Activated CD4-positive, alpha-beta T cell treated with anti-CD3 and anti-CD28 coated beads for 36 hours (primary cell): ENCODE measurements at regions of chr6 and their contacts with region 1.

Region 1: DNA sequence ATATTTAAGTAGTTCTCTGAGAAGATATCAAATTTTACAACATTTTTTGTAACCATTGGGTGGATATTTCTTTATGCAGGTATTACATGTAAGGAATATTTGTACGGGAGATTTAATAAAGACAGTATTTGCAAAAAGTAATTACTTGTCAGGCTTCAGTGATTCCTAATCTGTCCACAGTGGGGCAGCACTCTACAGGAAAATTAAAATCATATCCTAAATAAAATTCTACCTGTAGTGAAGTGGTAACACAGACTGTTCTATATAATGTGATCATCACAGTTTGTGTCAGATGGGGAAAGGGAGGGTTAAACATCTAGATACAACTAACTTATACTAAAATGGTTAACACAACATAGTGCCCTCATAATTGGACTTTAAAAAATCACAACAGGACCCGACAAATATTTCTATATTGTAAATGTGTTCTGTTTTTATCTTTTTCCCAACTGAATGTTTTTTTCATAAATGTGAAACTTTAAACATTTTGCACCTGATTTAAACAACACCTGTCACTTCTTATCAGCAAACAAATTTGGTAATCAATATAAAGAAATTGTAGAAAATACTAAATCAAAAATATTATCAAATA is 145.6 kb upstream of the MANEA start:
- DNase-seq: peak; percentile 59
- ATAC-seq: no peak
- H3K4me3 Mint-ChIP-seq: no peak overlapping the region
- H3K27ac Mint-ChIP-seq: no peak overlapping the region
- H3K4me1 Mint-ChIP-seq: no peaks in the 10 kb centered on the region
- H3K27me3 Mint-ChIP-seq: no peaks in the 10 kb centered on the region

Region 2: DNA sequence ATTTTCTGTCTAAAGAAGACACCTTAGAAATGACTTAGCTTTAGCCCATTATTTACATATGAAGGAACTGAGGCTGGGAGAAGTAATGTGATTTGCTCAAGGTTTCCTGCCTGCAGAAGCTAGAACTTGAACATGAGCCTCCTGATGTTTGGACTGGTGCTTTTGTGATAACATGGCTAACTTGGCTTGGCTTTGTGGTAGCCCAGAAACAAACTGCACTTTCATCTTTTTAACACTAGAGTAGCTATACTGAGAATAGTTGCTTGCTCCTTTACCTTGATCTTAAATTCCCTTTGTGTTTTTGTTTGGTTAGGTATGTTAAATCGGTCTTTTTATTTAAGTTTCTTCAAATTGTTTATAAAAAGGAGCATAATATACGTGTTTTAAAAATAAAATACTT is 17.9 kb before region 1 on chr6:
- CTCF ChIA-PET with region 1: no interaction called
- POLR2A ChIA-PET with region 1: no interaction called
- intact Hi-C with region 1: no loop called
- DNase-seq: no peak
- ATAC-seq: no peak
- H3K4me3 Mint-ChIP-seq: no peak overlapping the region
- H3K27ac Mint-ChIP-seq: no peak overlapping the region
- H3K4me1 Mint-ChIP-seq: no peaks in the 10 kb centered on the region
- H3K27me3 Mint-ChIP-seq: peaks cover 1% of the 10 kb centered on the region

Region 3: DNA sequence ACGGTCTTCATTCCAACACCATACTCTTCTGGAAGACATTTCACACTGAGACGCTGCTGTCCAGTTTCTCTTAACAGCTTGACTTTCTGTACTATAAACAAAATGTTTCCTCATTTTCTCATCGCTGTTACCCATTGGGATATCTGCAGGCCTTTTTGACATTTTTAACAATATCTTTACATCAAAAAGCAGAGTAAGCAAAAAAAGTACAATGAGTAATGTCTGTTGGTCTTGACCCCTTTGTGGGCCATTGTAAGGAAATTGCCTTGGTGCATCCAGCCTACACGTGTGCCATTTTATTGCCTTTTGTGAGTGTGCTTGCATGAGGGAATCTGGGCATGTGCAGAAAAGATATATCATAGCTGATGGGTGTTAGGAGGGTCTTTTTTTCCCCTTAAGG is 16.5 kb after region 1 on chr6:
- CTCF ChIA-PET with region 1: no interaction called
- POLR2A ChIA-PET with region 1: no interaction called
- intact Hi-C with region 1: no loop called
- DNase-seq: no peak
- ATAC-seq: no peak
- H3K4me3 Mint-ChIP-seq: no peak overlapping the region
- H3K27ac Mint-ChIP-seq: no peak overlapping the region
- H3K4me1 Mint-ChIP-seq: no peaks in the 10 kb centered on the region
- H3K27me3 Mint-ChIP-seq: peaks cover 3% of the 10 kb centered on the region

Region 4: DNA sequence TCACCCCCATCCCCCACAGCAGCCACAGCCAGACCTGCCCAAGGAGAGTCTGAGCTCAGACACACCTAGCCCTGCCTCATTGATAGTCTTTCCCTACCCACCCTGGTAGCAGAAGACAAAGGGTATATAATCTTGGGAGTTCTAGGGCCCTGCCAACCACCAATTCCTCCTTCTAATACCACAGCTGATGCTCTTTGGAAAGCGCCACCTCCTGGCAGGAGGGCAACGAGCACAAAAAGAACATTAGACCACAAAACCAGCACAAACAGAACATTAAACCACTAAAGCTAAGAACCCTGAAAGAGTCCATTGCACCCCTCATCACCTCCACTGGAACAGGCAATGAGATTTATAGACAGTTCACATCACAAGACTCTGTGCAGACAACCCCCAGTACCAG is 388.2 kb after region 1 on chr6:
- CTCF ChIA-PET with region 1: no interaction called
- POLR2A ChIA-PET with region 1: no interaction called
- intact Hi-C with region 1: loop called in 1 of 2 experiments (anchors 2 kb)
- DNase-seq: peak; percentile 12
- ATAC-seq: no peak
- H3K4me3 Mint-ChIP-seq: no peak overlapping the region
- H3K27ac Mint-ChIP-seq: no peak overlapping the region
- H3K4me1 Mint-ChIP-seq: no peaks in the 10 kb centered on the region
- H3K27me3 Mint-ChIP-seq: no peaks in the 10 kb centered on the region

Region 5: GRCh38 chr6:95866732-95867131 is 435.0 kb after region 1 on chr6:
- CTCF ChIA-PET with region 1: no interaction called
- POLR2A ChIA-PET with region 1: no interaction called
- intact Hi-C with region 1: loop called in 1 of 2 experiments (anchors 2 kb)
- DNase-seq: peak; percentile 18
- ATAC-seq: no peak
- H3K4me3 Mint-ChIP-seq: no peak overlapping the region
- H3K27ac Mint-ChIP-seq: no peak overlapping the region
- H3K4me1 Mint-ChIP-seq: no peaks in the 10 kb centered on the region
- H3K27me3 Mint-ChIP-seq: peaks cover 4% of the 10 kb centered on the region

Region 6: DNA sequence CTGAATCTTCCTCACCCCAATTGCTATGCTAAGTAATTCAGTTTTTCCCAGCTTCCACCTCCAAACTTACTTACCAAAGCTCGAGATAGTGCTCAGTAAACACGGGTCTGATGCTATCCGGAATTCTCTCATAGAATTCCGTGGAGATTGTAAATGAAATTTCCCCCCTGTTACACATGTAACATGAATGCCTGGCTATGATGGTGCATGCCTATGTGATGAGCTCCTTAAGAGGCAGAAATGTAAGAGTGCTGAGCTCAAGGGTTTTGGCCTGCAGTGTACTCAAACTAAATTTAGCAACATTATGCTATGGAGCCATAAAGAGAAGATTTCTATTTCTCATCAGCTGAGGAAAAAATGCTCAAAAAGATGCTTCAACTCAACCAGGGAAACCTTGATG is 450.6 kb after region 1 on chr6:
- CTCF ChIA-PET with region 1: no interaction called
- POLR2A ChIA-PET with region 1: no interaction called
- intact Hi-C with region 1: no loop called
- DNase-seq: no peak
- ATAC-seq: no peak
- H3K4me3 Mint-ChIP-seq: no peak overlapping the region
- H3K27ac Mint-ChIP-seq: no peak overlapping the region
- H3K4me1 Mint-ChIP-seq: no peaks in the 10 kb centered on the region
- H3K27me3 Mint-ChIP-seq: peaks cover 2% of the 10 kb centered on the region

Region 7: DNA sequence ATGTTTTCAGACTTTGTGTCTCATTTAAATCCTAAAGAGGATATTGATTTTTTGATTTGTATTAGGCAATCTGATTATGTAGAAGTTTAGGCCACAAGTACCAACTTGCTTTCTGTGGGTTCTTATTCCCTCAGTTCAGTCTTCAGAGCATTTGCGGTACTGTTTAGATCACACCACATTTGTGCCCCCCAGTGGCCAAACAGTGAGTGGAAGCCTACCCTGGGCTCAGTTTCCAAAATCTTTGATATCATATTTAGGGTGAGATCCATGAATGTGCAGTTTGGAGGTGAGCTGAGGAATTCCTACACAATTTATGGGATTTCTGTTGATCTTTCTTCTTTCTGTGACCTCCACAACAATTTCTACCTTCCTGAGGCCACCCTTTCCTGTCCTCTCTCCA is 491.8 kb after region 1 on chr6:
- CTCF ChIA-PET with region 1: no interaction called
- POLR2A ChIA-PET with region 1: no interaction called
- intact Hi-C with region 1: loop called (anchors 2 kb)
- DNase-seq: peak; percentile 35
- ATAC-seq: no peak
- H3K4me3 Mint-ChIP-seq: no peak overlapping the region
- H3K27ac Mint-ChIP-seq: no peak overlapping the region
- H3K4me1 Mint-ChIP-seq: no peaks in the 10 kb centered on the region
- H3K27me3 Mint-ChIP-seq: no peaks in the 10 kb centered on the region

Region 8: GRCh38 chr6:96468681-96469224 is 1037.0 kb after region 1 on chr6:
- CTCF ChIA-PET with region 1: no interaction called
- POLR2A ChIA-PET with region 1: no interaction called
- intact Hi-C with region 1: loop called in 1 of 2 experiments (anchors 2 kb)
- DNase-seq: no peak
- ATAC-seq: no peak
- H3K4me3 Mint-ChIP-seq: no peak overlapping the region
- H3K27ac Mint-ChIP-seq: no peak overlapping the region
- H3K4me1 Mint-ChIP-seq: peaks cover 26% of the 10 kb centered on the region
- H3K27me3 Mint-ChIP-seq: peaks cover 8% of the 10 kb centered on the region

Region 9: GRCh38 chr6:97059473-97059872 is 1627.7 kb after region 1 on chr6:
- CTCF ChIA-PET with region 1: no interaction called
- POLR2A ChIA-PET with region 1: no interaction called
- intact Hi-C with region 1: loop called (anchors 5 kb)
- DNase-seq: no peak
- ATAC-seq: peak; percentile 73
- H3K4me3 Mint-ChIP-seq: no peak overlapping the region
- H3K27ac Mint-ChIP-seq: no peak overlapping the region
- H3K4me1 Mint-ChIP-seq: peaks cover 2% of the 10 kb centered on the region
- H3K27me3 Mint-ChIP-seq: no peaks in the 10 kb centered on the region